ENCODE measurements at regions of chr3 and their contacts with region 1.

Region 1: GRCh38 chr3:183766745-183767606 is 58.4 kb downstream of the MAP6D1 start:
- DNase-seq: peak; percentile 71 to 86
- H3K4me3 ChIP-seq: no peak overlapping the region
- H3K4me1 ChIP-seq: no peaks in the 10 kb centered on the region
- H3K27me3 ChIP-seq: no peaks in the 10 kb centered on the region

Region 2: DNA sequence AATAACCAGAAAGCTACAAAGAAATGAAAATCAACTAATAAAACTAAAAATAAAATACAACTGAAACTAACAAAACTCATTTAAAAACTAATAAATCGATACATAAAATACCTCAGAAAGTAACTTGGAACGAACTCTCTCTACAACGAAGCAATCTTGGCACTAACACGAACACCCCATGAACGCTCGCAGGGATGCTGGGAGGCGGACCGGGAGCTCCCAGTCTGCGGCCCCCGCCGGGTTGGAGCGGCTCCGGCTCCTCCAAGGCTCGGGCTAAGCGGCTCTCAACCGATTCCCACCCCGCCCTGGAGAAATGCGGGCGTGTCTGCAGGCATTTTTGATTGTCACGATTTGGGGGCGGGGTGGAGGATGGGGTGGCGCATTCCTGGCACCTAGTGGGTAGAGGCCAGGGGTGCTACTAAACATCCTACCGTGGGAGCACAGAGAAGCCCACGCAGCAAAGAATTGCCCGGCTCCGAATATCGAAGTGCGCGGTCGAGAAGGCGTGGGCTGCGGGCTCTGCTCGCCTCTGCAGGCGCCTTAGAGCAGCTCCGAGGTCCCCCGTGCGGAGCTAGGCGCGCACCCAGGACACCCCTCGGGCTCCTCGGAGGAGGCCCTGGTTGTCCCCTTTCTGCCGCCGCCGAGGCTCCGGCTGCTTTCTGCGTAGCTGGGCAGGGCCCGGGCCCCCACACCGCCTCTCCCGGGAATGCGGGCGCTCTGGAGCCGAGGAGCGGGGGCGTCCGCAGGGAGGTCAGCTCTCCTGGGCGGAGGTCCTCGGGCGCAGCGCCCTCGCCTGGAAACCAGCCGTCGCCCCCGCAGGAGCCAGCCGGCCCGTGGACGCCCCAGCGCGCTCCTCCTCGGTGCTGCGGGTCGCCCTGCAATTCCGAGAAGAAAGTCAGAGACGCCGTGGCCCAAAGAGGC is 588.1 kb before region 1 on chr3:
- in situ Hi-C with region 1: loop called (anchors 25 kb)
- DNase-seq: peak; percentile 42 to 84
- H3K4me3 ChIP-seq: peak overlapping the region; percentile 44
- H3K4me1 ChIP-seq: no peaks in the 10 kb centered on the region
- H3K27me3 ChIP-seq: no peaks in the 10 kb centered on the region

Region 3: DNA sequence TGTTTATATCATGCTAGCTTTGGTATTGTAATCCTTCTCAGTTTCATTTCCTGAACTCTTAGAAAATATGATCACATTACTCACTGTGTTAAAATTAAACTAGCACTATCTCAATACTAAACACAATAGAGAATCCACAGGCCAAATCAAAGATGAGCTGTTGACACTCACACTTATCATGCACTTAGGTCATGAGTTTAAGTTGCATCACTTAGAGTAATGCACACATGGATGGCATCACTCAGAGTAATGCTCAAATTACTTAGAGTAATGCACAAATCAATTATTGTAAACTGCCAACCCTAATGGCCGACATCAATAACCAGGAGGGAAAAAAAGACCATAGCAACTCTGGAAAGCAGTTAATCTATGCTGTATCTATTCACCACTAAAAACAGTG is 298.6 kb before region 1 on chr3:
- in situ Hi-C with region 1: loop called (anchors 5 kb)
- DNase-seq: no peak
- H3K4me3 ChIP-seq: no peak overlapping the region
- H3K4me1 ChIP-seq: no peaks in the 10 kb centered on the region
- H3K27me3 ChIP-seq: no peaks in the 10 kb centered on the region